Esophagus muscularis mucosa (tissue), 4 donors: ENCODE measurements at regions of chr5 and their contacts with region 1.

Region 1: GRCh38 chr5:65925601-65926275 is 637 bp upstream of the ERBIN start:
- DNase-seq: peak; percentile 91
- H3K4me3 ChIP-seq: peak overlapping the region; percentile 88 to 99 (median 97)
- H3K27ac ChIP-seq: peak overlapping the region; percentile 96 to 100 (median 100)
- H3K4me1 ChIP-seq: peaks cover 25 to 33% (median 31%) of the 10 kb centered on the region in 4 donors
- H3K27me3 ChIP-seq: no peaks in the 10 kb centered on the region
- CTCF ChIP-seq: peak; percentile 19 to 41 (median 22)
- EP300 ChIP-seq: no peak
- POLR2A ChIP-seq: peak; percentile 78

Region 2: DNA sequence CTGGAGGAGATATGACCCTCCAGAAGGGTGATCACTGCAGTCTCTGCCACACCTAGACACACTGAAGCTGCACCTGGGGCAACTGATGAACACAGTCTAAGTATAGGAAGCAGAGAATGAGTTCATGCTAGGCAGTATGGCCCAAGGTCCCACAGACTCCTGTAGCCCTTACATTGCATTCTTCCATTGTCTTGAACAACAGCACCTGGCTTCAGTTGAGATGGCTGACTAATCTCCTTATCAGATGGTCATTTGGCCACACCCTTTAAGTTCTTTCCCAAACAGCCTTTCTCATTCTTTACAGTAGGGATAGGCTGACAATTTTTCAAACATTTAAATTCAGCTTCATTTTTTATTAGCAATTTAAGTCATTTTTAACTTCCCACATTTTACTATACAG is 385.9 kb before region 1 on chr5:
- intact Hi-C with region 1: no loop called
- DNase-seq: no peak
- H3K4me3 ChIP-seq: no peak overlapping the region
- H3K27ac ChIP-seq: no peak overlapping the region
- H3K4me1 ChIP-seq: no peaks in the 10 kb centered on the region
- H3K27me3 ChIP-seq: no peaks in the 10 kb centered on the region
- CTCF ChIP-seq: no peak
- EP300 ChIP-seq: no peak
- POLR2A ChIP-seq: no peak

Region 3: GRCh38 chr5:65630981-65631380 is 294.8 kb before region 1 on chr5:
- intact Hi-C with region 1: no loop called
- DNase-seq: no peak
- H3K4me3 ChIP-seq: no peak overlapping the region
- H3K27ac ChIP-seq: no peak overlapping the region
- H3K4me1 ChIP-seq: peaks cover 3 to 9% (median 8%) of the 10 kb centered on the region in 4 donors
- H3K27me3 ChIP-seq: no peaks in the 10 kb centered on the region
- CTCF ChIP-seq: no peak
- EP300 ChIP-seq: no peak
- POLR2A ChIP-seq: no peak

Region 4: DNA sequence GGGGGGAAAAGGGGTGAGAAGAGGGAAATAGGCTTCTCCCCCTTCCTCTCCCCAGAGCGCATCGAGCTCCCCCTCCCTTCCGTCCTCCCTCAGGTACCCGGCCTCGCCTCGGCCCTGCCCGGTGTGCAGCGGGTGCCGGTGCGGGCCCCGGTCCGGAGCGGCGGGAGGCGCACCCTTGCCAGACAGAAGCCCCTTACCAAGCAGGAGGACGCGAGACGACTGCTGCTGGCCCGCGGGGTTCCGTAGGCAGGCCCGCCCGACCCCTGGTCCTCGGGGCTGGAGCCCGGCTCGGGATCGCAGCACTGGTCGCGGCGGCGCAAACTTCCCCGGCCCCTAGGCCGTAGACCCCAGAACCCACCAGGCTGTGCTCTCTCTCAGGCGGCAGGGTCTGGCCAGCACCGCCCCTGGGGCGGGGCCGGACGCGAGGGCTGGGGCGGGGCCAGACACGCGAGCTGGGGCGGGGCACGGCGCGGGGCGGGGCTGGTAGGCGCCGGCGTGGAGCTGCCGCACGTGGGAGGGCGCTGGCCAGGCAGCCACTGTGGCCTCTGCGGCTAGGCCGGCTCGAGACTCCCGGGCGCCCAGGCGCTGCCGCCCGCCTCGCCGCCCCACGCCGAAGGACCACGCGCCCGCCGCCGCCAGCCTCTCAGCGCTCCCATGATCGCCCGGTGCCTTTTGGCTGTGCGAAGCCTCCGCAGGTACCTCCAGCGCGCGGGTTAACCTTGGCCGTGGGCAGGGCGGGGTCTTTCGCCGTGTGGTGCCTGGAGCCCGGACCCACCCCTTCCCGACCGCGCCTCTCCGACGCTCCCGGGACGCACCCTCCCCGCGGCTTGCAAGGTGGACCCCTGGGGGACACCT is 203.8 kb before region 1 on chr5 and contains the starts of genes NLN and SGTB:
- intact Hi-C with region 1: loop called (anchors 5 kb)
- DNase-seq: peak; percentile 95
- H3K4me3 ChIP-seq: peak within 1 kb of the TSS; percentile 77 to 99 (median 91)
- H3K27ac ChIP-seq: peak within 1 kb of the TSS; percentile 75 to 86 (median 80)
- H3K4me1 ChIP-seq: peaks cover 10 to 35% (median 28%) of the 10 kb centered on the region in 4 donors
- H3K27me3 ChIP-seq: no peaks in the 10 kb centered on the region
- CTCF ChIP-seq: no peak
- EP300 ChIP-seq: no peak
- POLR2A ChIP-seq: no peak
- total RNA-seq, gene NLN: 8.7 to 11.9 (median 9.1) TPM
- total RNA-seq, gene SGTB: 11.4 to 16.5 (median 14.4) TPM

Region 5: GRCh38 chr5:66041627-66042026 is 115.9 kb after region 1 on chr5:
- intact Hi-C with region 1: loop called (anchors 10 kb)
- DNase-seq: no peak
- H3K4me3 ChIP-seq: no peak overlapping the region
- H3K27ac ChIP-seq: no peak overlapping the region
- H3K4me1 ChIP-seq: peaks cover 0 to 9% (median 8%) of the 10 kb centered on the region in 4 donors
- H3K27me3 ChIP-seq: no peaks in the 10 kb centered on the region
- CTCF ChIP-seq: no peak
- EP300 ChIP-seq: no peak
- POLR2A ChIP-seq: no peak

Region 6: GRCh38 chr5:66144074-66144833 is 218.5 kb after region 1 on chr5 and contains the start of gene SREK1:
- intact Hi-C with region 1: loop called (anchors 2 kb)
- DNase-seq: peak; percentile 98
- H3K4me3 ChIP-seq: peak within 1 kb of the TSS; percentile 74 to 87 (median 84)
- H3K27ac ChIP-seq: peak within 1 kb of the TSS; percentile 95 to 99 (median 98)
- H3K4me1 ChIP-seq: peaks cover 23 to 44% (median 43%) of the 10 kb centered on the region in 4 donors
- H3K27me3 ChIP-seq: no peaks in the 10 kb centered on the region
- CTCF ChIP-seq: no peak
- EP300 ChIP-seq: no peak
- POLR2A ChIP-seq: no peak
- total RNA-seq, gene SREK1: 29.9 to 51.9 (median 44.9) TPM

Region 7: GRCh38 chr5:67267347-67268216 is 1341.8 kb after region 1 on chr5:
- intact Hi-C with region 1: no loop called
- DNase-seq: peak; percentile 62
- H3K4me3 ChIP-seq: no peak overlapping the region
- H3K27ac ChIP-seq: peak overlapping the region; percentile 88 to 92 (median 90)
- H3K4me1 ChIP-seq: peaks cover 30 to 95% (median 87%) of the 10 kb centered on the region in 4 donors
- H3K27me3 ChIP-seq: no peaks in the 10 kb centered on the region
- CTCF ChIP-seq: no peak
- EP300 ChIP-seq: no peak
- POLR2A ChIP-seq: no peak